Prostate gland (tissue), 2 donors: ENCODE measurements at regions of chr19 and their contacts with region 1.

Region 1: DNA sequence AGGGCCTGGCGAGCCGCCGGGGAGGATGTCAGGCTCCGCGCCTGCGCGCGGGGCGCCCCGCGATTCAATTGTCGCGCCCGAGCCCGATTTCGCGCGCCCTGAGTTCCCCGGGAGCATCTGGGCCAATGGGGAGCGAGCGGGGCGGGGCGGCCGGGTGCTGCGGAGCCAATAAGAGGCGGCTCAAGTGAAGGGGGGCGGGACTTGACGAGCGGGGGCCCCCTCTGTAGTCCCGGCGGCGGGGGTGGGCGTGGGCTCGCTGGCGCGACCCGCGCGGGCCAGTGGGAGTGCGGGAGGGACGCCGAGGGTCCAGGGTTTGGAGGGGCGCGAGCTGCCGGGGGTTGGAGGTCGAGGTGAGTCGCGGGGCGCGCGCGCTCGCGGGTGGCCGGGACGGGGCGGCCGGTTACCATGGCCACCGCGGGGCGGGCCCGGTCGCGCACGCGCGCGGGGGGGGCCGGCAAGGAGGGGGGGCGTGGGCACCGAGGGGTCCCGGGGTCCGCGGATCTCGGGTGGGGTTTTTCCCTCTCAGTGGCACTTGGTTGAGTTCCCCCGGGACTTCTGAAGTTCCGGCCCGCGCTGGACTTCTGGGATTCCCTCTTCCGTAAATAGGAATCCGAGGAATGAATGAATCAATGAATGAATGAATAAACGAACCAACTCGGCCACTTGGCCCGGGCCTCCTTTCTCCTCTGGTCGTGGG is 744 bp downstream of the UHRF1 start:
- DNase-seq: peak; percentile 91
- H3K4me3 ChIP-seq: peak overlapping the region; percentile 58 to 73
- H3K27ac ChIP-seq: no peak overlapping the region
- H3K4me1 ChIP-seq: peaks cover 8% of the 10 kb centered on the region
- H3K27me3 ChIP-seq: no peaks in the 10 kb centered on the region
- CTCF ChIP-seq: no peak
- POLR2A ChIP-seq: no peak

Region 2: GRCh38 chr19:4811328-4812131 is 98.5 kb before region 1 on chr19:
- intact Hi-C with region 1: loop called (anchors 2 kb)
- DNase-seq: peak; percentile 60
- H3K4me3 ChIP-seq: no peak overlapping the region
- H3K27ac ChIP-seq: no peak overlapping the region
- H3K4me1 ChIP-seq: no peaks in the 10 kb centered on the region
- H3K27me3 ChIP-seq: no peaks in the 10 kb centered on the region
- CTCF ChIP-seq: peak; percentile 71 to 84 (median 74)
- POLR2A ChIP-seq: no peak

Region 3: GRCh38 chr19:4877753-4878490 is 32.1 kb before region 1 on chr19:
- intact Hi-C with region 1: loop called (anchors 2 kb)
- DNase-seq: peak; percentile 76
- H3K4me3 ChIP-seq: no peak overlapping the region
- H3K27ac ChIP-seq: peak overlapping the region; percentile 82
- H3K4me1 ChIP-seq: peaks cover 11% of the 10 kb centered on the region
- H3K27me3 ChIP-seq: no peaks in the 10 kb centered on the region
- CTCF ChIP-seq: no peak
- POLR2A ChIP-seq: no peak

Region 4: DNA sequence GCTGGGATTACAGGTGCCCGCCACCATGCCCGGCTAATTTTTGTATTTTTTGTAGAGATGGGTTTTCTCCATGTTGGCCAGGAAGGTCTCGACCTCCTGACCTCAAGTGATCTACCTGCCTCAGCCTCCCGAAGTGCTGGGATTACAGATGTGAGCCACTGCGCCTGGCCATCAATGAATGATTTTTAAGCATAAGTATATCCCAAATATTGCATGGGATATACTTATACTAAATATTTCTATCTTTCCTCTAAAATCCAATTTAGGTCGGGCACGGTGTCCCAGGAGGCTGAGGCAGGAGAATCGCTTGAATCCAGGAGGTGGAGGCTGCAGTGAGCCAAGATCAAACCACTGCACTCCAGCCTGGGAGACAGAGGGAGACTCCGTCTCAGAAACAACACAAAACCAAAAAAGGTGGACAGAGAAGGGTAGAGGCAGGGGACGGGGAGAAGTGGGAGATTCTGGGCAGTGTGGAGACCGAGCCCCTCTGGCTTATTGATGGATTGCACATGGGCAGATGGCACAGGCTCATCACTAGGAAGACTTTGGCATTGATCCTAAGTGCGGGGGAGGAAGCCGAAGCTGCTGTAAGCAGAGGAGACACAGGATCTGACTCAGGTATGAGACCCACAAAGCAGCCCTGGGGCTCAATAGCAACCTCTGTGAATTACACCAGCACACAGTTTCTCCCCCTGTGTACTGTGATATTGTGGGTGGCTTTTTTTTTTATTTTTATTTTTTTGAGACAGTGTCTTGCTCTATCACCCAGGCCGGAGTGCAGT is 20.8 kb before region 1 on chr19:
- intact Hi-C with region 1: no loop called
- DNase-seq: no peak
- H3K4me3 ChIP-seq: no peak overlapping the region
- H3K27ac ChIP-seq: no peak overlapping the region
- H3K4me1 ChIP-seq: no peaks in the 10 kb centered on the region
- H3K27me3 ChIP-seq: no peaks in the 10 kb centered on the region
- CTCF ChIP-seq: no peak
- POLR2A ChIP-seq: no peak